Activated naive CD8-positive, alpha-beta T cell treated with anti-CD3 and anti-CD28 coated beads, Interleukin-2, amount 10 ng/mL, durations not matched to agents 7 days and 5 days (primary cell): ENCODE measurements at regions of chr2 and their contacts with region 1.

Region 1: GRCh38 chr2:33475224-33476130 is 972 bp upstream of the RASGRP3 start:
- DNase-seq: no peak
- ATAC-seq: peak; percentile 76
- H3K4me3 Mint-ChIP-seq: peak overlapping the region; percentile 94
- H3K27ac Mint-ChIP-seq: peak overlapping the region; percentile 100
- H3K4me1 Mint-ChIP-seq: peaks cover 22% of the 10 kb centered on the region
- H3K27me3 Mint-ChIP-seq: peaks cover 3% of the 10 kb centered on the region

Region 2: DNA sequence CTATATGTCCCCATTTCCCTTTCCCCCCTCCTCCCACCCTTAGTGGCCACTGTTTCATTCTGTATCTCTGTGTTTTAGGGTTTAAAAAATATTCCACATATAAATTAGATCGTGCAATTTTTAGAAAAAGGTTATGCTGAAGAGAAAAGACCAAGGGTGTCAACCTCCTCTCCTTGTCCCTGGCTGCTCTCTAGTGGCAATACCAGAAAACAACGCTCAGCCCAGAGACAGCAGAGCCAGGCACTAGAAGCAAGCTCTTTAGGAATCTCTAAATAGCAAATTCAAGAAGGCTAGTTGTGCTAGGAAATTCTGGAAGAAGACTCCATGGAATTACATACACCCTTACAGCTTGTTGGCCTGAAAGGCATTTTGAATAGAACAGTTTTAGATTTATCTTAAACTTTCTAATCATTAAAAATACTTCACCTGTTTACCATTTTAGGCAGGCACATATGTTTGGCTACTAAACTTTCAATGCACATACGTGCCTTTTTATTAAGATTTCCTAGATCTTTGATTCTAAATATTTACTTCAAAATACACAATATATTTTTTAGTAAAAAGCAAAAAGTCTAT is 34.2 kb before region 1 on chr2:
- POLR2A ChIA-PET with region 1: no interaction called
- DNase-seq: no peak
- ATAC-seq: no peak
- H3K4me3 Mint-ChIP-seq: no peak overlapping the region
- H3K27ac Mint-ChIP-seq: no peak overlapping the region
- H3K4me1 Mint-ChIP-seq: no peaks in the 10 kb centered on the region
- H3K27me3 Mint-ChIP-seq: peaks cover 13% of the 10 kb centered on the region

Region 3: DNA sequence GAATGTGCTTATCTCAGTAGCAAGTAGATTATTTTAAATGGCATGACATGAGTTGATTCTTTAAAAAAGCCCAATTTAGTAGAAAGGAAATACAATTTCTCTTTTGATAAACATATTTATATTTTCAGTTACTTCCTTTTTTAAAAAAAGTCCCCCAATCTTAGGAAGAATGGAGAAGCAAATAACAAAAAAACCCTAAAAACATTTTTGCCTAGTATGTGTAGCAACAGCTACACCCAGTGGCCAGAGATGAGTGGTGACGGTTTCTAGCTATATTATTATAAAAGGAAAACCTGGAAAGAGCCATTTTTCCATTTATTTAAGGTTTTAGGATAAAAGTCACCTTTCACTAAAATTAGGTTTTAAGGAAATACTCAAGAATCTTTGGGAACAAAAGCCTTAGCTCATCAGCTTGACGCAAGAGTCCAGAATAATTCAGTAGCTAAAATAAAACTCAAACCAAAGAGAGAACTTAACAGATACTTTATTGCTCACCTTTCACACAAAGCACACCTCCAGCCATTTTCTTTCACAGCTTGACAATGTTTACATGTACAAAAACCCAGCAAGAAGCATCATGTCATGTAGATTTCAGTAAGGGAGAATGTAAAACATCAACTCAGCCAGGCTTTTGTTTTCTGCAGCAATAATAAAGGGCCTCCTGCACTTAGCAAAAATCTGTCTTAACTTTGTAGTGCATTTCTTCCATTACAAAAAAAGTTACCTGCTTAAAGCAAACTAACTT is 107.9 kb after region 1 on chr2:
- POLR2A ChIA-PET with region 1: interaction called, 19 read pairs
- DNase-seq: no peak
- ATAC-seq: no peak
- H3K4me3 Mint-ChIP-seq: no peak overlapping the region
- H3K27ac Mint-ChIP-seq: no peak overlapping the region
- H3K4me1 Mint-ChIP-seq: peaks cover 13% of the 10 kb centered on the region
- H3K27me3 Mint-ChIP-seq: no peaks in the 10 kb centered on the region

Region 4: GRCh38 chr2:33599175-33599942 is 123.9 kb after region 1 on chr2 and contains the start of gene FAM98A:
- POLR2A ChIA-PET with region 1: interaction called, 34 read pairs
- DNase-seq: peak; percentile 97
- ATAC-seq: peak; percentile 94
- H3K4me3 Mint-ChIP-seq: peak within 1 kb of the TSS; percentile 91
- H3K27ac Mint-ChIP-seq: peak within 1 kb of the TSS; percentile 91
- H3K4me1 Mint-ChIP-seq: peaks cover 22% of the 10 kb centered on the region
- H3K27me3 Mint-ChIP-seq: no peaks in the 10 kb centered on the region
- total RNA-seq, gene FAM98A: 32.4 to 33.0 TPM